GM12878 (cell line): ENCODE measurements at regions of chr12 and their contacts with region 1.

Region 1: GRCh38 chr12:66169221-66170170 is at the start of gene TMBIM4:
- DNase-seq: peak; percentile 77
- ATAC-seq: peak; percentile 90
- H3K4me3 ChIP-seq: peak within 1 kb of the TSS; percentile 62
- H3K27ac ChIP-seq: peak within 1 kb of the TSS; percentile 99
- H3K4me1 ChIP-seq: no peaks in the 10 kb centered on the region
- H3K27me3 ChIP-seq: no peaks in the 10 kb centered on the region
- CTCF ChIP-seq: peak; percentile 18 to 43 (median 23); a peak in 4 of 6 replicates
- EP300 ChIP-seq: peak in 1 of 2 experiments; percentile 1; a peak in 1 of 4 replicates
- POLR2A ChIP-seq: peak; percentile 96
- RAD21 ChIP-seq: peak; percentile 45
- polyA plus RNA-seq, gene TMBIM4: 261 to 341 TPM

Region 2: GRCh38 chr12:64403707-64404469 is 1765.6 kb before region 1 on chr12 and contains the start of gene XPOT:
- CTCF ChIA-PET with region 1: no interaction called
- POLR2A ChIA-PET with region 1: no interaction called
- RAD21 ChIA-PET with region 1: no interaction called
- SMC1A ChIA-PET with region 1: no interaction called
- in situ Hi-C with region 1: no loop called
- intact Hi-C with region 1: loop called (anchors 10 kb)
- DNase-seq: peak; percentile 84
- ATAC-seq: peak; percentile 95
- H3K4me3 ChIP-seq: peak within 1 kb of the TSS; percentile 85
- H3K27ac ChIP-seq: peak within 1 kb of the TSS; percentile 93
- H3K4me1 ChIP-seq: peaks cover 4% of the 10 kb centered on the region
- H3K27me3 ChIP-seq: no peaks in the 10 kb centered on the region
- CTCF ChIP-seq: 0 out of 6 replicates have a peak, but pooled peaks of 1 of the 3 experiments have one; percentile 0
- EP300 ChIP-seq: no peak
- POLR2A ChIP-seq: peak; percentile 87
- RAD21 ChIP-seq: no peak
- polyA plus RNA-seq, gene XPOT: 11.9 to 14.8 TPM

Region 3: GRCh38 chr12:66144791-66145754 is 24.4 kb before region 1 on chr12:
- CTCF ChIA-PET with region 1: interaction called, 4 read pairs
- POLR2A ChIA-PET with region 1: interaction called, 3 read pairs
- RAD21 ChIA-PET with region 1: no interaction called
- SMC1A ChIA-PET with region 1: interaction called, 10 read pairs
- in situ Hi-C with region 1: no loop called
- intact Hi-C with region 1: no loop called
- DNase-seq: no peak
- ATAC-seq: peak; percentile 64
- H3K4me3 ChIP-seq: no peak overlapping the region
- H3K27ac ChIP-seq: no peak overlapping the region
- H3K4me1 ChIP-seq: no peaks in the 10 kb centered on the region
- H3K27me3 ChIP-seq: no peaks in the 10 kb centered on the region
- CTCF ChIP-seq: peak; percentile 9 to 59 (median 17); a peak in 2 of 6 replicates
- EP300 ChIP-seq: no peak
- POLR2A ChIP-seq: no peak
- RAD21 ChIP-seq: 0 out of 2 replicates have a peak, but pooled peaks have one; percentile 30

Region 4: GRCh38 chr12:66196806-66197205 is 27.3 kb after region 1 on chr12:
- CTCF ChIA-PET with region 1: interaction called, 20 read pairs
- POLR2A ChIA-PET with region 1: interaction called, 10 read pairs
- RAD21 ChIA-PET with region 1: interaction called, 20 read pairs
- SMC1A ChIA-PET with region 1: interaction called, 21 read pairs
- in situ Hi-C with region 1: no loop called
- intact Hi-C with region 1: no loop called
- DNase-seq: peak; percentile 54
- ATAC-seq: peak; percentile 88
- H3K4me3 ChIP-seq: no peak overlapping the region
- H3K27ac ChIP-seq: no peak overlapping the region; the same call in 1 of the 2 replicates
- H3K4me1 ChIP-seq: peaks cover 21% of the 10 kb centered on the region
- H3K27me3 ChIP-seq: no peaks in the 10 kb centered on the region
- CTCF ChIP-seq: no peak
- EP300 ChIP-seq: peak; percentile 39 to 79; a peak in 3 of 4 replicates
- POLR2A ChIP-seq: no peak
- RAD21 ChIP-seq: no peak

Region 5: DNA sequence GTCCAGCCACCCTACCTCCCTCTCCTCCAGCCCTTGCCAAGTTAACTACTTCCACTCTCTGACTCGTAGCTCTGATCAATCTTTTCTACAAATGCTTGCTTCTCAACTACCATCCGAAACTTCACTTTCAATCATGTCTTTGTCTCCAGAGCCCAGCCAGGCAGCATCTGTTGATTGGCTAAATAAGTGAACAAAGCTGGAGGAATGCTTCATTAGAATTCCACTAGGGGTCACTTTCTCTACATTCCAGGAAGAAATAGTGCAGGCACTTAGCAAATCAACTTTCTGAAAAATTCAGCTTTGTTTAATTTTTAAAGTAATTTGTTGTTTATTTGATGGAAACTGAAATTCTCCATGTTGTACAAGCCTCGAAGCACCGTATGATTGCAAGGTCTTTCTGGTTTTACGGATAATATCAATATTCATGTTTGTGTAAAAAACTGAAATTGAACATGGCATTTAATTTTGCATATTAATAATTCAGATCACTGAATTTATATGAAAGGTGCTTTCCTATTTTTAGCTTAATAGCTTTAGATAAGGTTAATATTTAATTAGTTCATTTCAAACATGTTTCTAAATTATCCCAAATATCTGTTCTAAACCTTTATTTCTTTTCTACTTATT is 100.4 kb after region 1 on chr12:
- CTCF ChIA-PET with region 1: interaction called, 12 read pairs
- POLR2A ChIA-PET with region 1: interaction called, 3 read pairs
- RAD21 ChIA-PET with region 1: interaction called, 10 read pairs
- SMC1A ChIA-PET with region 1: interaction called, 7 read pairs
- in situ Hi-C with region 1: no loop called
- intact Hi-C with region 1: no loop called
- DNase-seq: peak; percentile 5
- ATAC-seq: peak; percentile 80
- H3K4me3 ChIP-seq: no peak overlapping the region
- H3K27ac ChIP-seq: no peak overlapping the region
- H3K4me1 ChIP-seq: peaks cover 12% of the 10 kb centered on the region
- H3K27me3 ChIP-seq: no peaks in the 10 kb centered on the region
- CTCF ChIP-seq: peak; percentile 46 to 59 (median 53); a peak in 5 of 6 replicates
- EP300 ChIP-seq: no peak
- POLR2A ChIP-seq: no peak
- RAD21 ChIP-seq: peak; percentile 73